CD8-positive, alpha-beta T cell (primary cell): ENCODE measurements at regions of chrX and their contacts with region 1.

Region 1: GRCh38 chrX:136496770-136497598 is at the start of gene HTATSF1:
- DNase-seq: peak; percentile 70 to 94 (median 83)
- ATAC-seq: peak; percentile 83
- H3K4me3 ChIP-seq: peak within 1 kb of the TSS; percentile 44 to 83
- H3K4me3 Mint-ChIP-seq: peak within 1 kb of the TSS; percentile 92
- H3K27ac ChIP-seq: peak within 1 kb of the TSS; percentile 84 to 94
- H3K27ac Mint-ChIP-seq: peak within 1 kb of the TSS; percentile 99
- H3K4me1 ChIP-seq: peaks cover 18% of the 10 kb centered on the region
- H3K4me1 Mint-ChIP-seq: peaks cover 23% of the 10 kb centered on the region
- H3K27me3 ChIP-seq: no peaks in the 10 kb centered on the region
- H3K27me3 Mint-ChIP-seq: no peaks in the 10 kb centered on the region
- CTCF ChIP-seq: no peak
- total RNA-seq, gene HTATSF1: 28.5 to 29.5 TPM

Region 2: GRCh38 chrX:135973548-135974278 is 523.3 kb before region 1 on chrX and contains the start of gene MMGT1:
- CTCF ChIA-PET with region 1: no interaction called
- POLR2A ChIA-PET with region 1: no interaction called
- intact Hi-C with region 1: loop called in 1 of 2 experiments (anchors 5 kb)
- DNase-seq: peak; percentile 62 to 92 (median 78)
- ATAC-seq: peak; percentile 87
- H3K4me3 ChIP-seq: peak within 1 kb of the TSS; percentile 91 to 99
- H3K4me3 Mint-ChIP-seq: peak within 1 kb of the TSS; percentile 97
- H3K27ac ChIP-seq: peak within 1 kb of the TSS; percentile 93 to 94
- H3K27ac Mint-ChIP-seq: peak within 1 kb of the TSS; percentile 96
- H3K4me1 ChIP-seq: peaks cover 14% of the 10 kb centered on the region
- H3K4me1 Mint-ChIP-seq: peaks cover 36% of the 10 kb centered on the region
- H3K27me3 ChIP-seq: no peaks in the 10 kb centered on the region
- H3K27me3 Mint-ChIP-seq: no peaks in the 10 kb centered on the region
- CTCF ChIP-seq: no peak
- total RNA-seq, gene MMGT1: 35.0 to 35.6 TPM

Region 3: GRCh38 chrX:136147315-136147901 is 349.6 kb before region 1 on chrX and contains the start of gene FHL1:
- CTCF ChIA-PET with region 1: no interaction called
- POLR2A ChIA-PET with region 1: no interaction called
- intact Hi-C with region 1: loop called in 1 of 2 experiments (anchors 5 kb)
- DNase-seq: peak in 8 of 9 experiments; percentile 22 to 68 (median 45)
- ATAC-seq: peak; percentile 75
- H3K4me3 ChIP-seq: peak within 1 kb of the TSS; percentile 57
- H3K4me3 Mint-ChIP-seq: peak within 1 kb of the TSS; percentile 86
- H3K27ac ChIP-seq: peak within 1 kb of the TSS in 1 of 2 experiments; percentile 48
- H3K27ac Mint-ChIP-seq: peak within 1 kb of the TSS; percentile 76
- H3K4me1 ChIP-seq: peaks cover 18% of the 10 kb centered on the region
- H3K4me1 Mint-ChIP-seq: peaks cover 38% of the 10 kb centered on the region
- H3K27me3 ChIP-seq: no peaks in the 10 kb centered on the region
- H3K27me3 Mint-ChIP-seq: no peaks in the 10 kb centered on the region
- CTCF ChIP-seq: no peak
- total RNA-seq, gene FHL1: 10.7 to 11.8 TPM

Region 4: DNA sequence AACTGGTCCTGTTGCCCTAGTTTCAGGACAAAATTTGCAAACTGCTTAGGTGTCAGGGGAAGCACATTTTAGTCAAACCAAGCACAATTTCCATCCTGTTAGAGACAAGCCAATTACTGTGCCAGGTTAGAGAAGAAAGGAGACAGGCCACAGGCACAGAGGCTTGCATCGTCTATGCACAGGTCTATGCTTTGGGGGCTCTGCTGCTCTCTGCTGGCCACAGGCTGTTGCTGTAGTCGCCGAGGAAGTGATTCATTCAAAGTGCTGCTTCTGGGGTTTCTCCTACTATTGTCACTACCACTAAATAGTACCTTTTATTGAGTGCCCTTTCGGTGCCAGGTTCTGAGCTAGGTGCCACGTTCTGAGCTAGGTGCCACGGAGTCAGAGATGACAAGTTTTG is 80.6 kb after region 1 on chrX:
- CTCF ChIA-PET with region 1: no interaction called
- POLR2A ChIA-PET with region 1: interaction called, 5 read pairs
- intact Hi-C with region 1: loop called in 1 of 2 experiments (anchors 5 kb)
- DNase-seq: peak; percentile 30 to 79 (median 62)
- ATAC-seq: peak; percentile 99
- H3K4me3 ChIP-seq: no peak overlapping the region
- H3K4me3 Mint-ChIP-seq: no peak overlapping the region
- H3K27ac ChIP-seq: no peak overlapping the region
- H3K27ac Mint-ChIP-seq: peak overlapping the region; percentile 46
- H3K4me1 ChIP-seq: peaks cover 3% of the 10 kb centered on the region
- H3K4me1 Mint-ChIP-seq: peaks cover 7% of the 10 kb centered on the region
- H3K27me3 ChIP-seq: no peaks in the 10 kb centered on the region
- H3K27me3 Mint-ChIP-seq: no peaks in the 10 kb centered on the region
- CTCF ChIP-seq: peak; percentile 55

Region 5: GRCh38 chrX:136725446-136726104 is 228.6 kb after region 1 on chrX:
- CTCF ChIA-PET with region 1: no interaction called
- POLR2A ChIA-PET with region 1: no interaction called
- intact Hi-C with region 1: no loop called
- DNase-seq: no peak
- ATAC-seq: no peak
- H3K4me3 ChIP-seq: no peak overlapping the region
- H3K4me3 Mint-ChIP-seq: no peak overlapping the region
- H3K27ac ChIP-seq: no peak overlapping the region
- H3K27ac Mint-ChIP-seq: no peak overlapping the region
- H3K4me1 ChIP-seq: peaks cover 16% of the 10 kb centered on the region
- H3K4me1 Mint-ChIP-seq: peaks cover 14% of the 10 kb centered on the region
- H3K27me3 ChIP-seq: no peaks in the 10 kb centered on the region
- H3K27me3 Mint-ChIP-seq: no peaks in the 10 kb centered on the region
- CTCF ChIP-seq: no peak

Region 6: DNA sequence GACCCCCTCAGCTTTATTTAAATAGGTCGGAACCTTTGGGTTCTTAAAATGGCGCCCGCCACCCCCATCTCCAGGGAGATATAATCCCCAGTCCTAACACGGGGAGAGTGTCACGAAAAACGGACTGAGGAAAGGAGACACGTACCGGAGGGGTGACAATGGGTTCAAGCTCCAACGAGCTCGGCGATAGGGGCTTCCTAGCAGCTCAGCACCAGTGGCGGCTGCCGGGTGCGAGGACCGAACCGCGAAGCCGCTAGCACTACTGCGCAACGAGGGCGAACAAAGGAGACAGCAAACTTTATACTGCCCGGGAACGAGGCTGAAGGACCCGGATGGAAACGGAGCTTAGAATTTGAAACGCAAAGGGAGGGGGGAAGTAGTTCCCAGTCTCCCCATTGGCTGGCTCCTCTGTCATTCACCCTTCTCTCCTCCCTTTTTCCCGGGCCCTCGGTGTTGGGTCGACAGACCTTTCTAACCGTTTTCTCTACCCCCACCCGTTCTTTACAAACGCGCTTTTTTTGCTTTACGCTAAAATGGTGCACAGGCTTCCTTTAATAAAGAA is 383.5 kb after region 1 on chrX and contains the start of gene RBMX:
- CTCF ChIA-PET with region 1: no interaction called
- POLR2A ChIA-PET with region 1: interaction called, 5 read pairs
- intact Hi-C with region 1: loop called (anchors 1 to 2 kb)
- DNase-seq: peak; percentile 78 to 95 (median 90)
- ATAC-seq: peak; percentile 82
- H3K4me3 ChIP-seq: peak within 1 kb of the TSS; percentile 86 to 90
- H3K4me3 Mint-ChIP-seq: peak within 1 kb of the TSS; percentile 97
- H3K27ac ChIP-seq: peak within 1 kb of the TSS; percentile 88 to 93
- H3K27ac Mint-ChIP-seq: peak within 1 kb of the TSS; percentile 98
- H3K4me1 ChIP-seq: peaks cover 16% of the 10 kb centered on the region
- H3K4me1 Mint-ChIP-seq: peaks cover 23% of the 10 kb centered on the region
- H3K27me3 ChIP-seq: no peaks in the 10 kb centered on the region
- H3K27me3 Mint-ChIP-seq: no peaks in the 10 kb centered on the region
- CTCF ChIP-seq: no peak
- total RNA-seq, gene RBMX: 306 to 307 TPM